HEK293T (cell line): ENCODE measurements at regions of chr16 and their contacts with region 1.

Region 1: GRCh38 chr16:30065143-30065850 is at the start of gene ALDOA:
- DNase-seq: peak; percentile 98

Region 2: DNA sequence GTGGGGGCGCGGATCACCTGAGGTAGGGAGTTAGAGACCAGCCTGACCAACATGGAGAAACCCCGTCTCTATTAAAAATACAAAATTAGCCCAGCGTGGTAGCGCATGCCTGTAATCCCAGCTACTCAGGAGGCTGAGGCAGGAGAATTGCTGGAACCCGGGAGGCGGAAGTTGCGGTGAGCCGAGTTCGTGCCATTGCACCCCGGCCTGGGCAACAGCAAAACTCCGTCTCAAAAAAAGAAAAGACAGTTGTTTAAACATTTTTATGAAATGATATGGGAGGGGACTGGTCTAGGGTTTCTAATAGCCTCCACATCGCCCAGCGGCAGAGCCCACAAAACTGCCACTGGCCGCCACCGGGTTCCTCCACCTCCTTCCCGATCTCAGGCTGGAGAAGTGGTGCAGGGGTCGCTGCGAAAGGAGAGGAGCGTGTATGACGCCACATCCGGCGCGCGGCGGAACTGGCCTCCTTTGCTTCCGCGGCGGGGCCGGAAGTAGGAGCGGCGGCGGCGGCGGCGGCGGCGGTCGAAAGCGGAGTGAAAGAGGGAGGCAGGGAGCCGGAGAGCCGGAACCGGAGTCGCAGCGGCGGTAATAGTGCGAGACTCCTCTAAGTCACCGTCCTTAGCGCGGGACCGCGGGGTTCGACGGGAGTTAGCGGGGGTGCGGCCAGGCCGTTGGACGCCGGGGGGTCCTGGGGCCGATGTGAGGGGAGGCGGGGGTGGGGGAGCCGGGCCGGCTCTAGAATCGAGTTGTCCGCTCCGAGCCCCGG is 10.4 kb after region 1 on chr16 and contains the start of gene PPP4C:
- CTCF ChIA-PET with region 1: no interaction called
- POLR2A ChIA-PET with region 1: interaction called, 56 read pairs
- DNase-seq: peak; percentile 99

Region 3: GRCh38 chr16:30112197-30113030 is 47.1 kb after region 1 on chr16:
- CTCF ChIA-PET with region 1: interaction called, 13 read pairs
- POLR2A ChIA-PET with region 1: interaction called, 5 read pairs
- DNase-seq: peak; percentile 95